ENCODE measurements at regions of chr6 and their contacts with region 1.

Region 1: DNA sequence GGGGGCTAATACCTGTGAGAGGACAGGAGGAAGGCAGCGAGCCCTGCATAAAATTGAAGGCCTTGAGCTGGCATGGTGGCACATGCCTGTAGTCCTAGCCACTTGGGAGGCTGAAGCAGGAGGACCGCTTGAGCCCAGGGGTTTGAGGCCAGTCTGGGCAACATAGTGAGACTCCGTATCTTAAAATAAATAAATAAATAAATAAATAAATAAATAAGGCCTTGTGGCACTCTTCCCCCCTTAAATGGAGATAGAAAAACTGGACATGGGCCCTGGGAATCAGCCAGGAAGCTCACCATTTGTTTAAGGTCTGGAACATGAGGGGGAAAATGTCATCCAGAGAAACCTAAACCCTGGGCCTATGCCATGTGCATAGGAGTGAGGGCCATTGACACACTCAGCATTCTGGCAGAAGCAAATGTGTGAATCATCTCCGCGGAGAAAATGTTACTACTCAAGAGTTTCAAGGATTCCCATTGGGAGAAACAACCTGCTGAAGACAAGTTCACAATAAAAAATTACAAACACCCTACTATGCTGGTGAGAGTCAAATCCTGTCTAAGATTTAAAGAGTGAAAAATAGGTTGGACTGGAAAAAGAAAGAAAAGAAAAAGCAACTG is 51.9 kb upstream of the UBR2 start:
- DNase-seq: no peak
- H3K4me3 ChIP-seq: no peak overlapping the region
- H3K27ac ChIP-seq: no peak overlapping the region
- H3K4me1 ChIP-seq: no peaks in the 10 kb centered on the region
- H3K27me3 ChIP-seq: no peaks in the 10 kb centered on the region
- CTCF ChIP-seq: no peak

Region 2: DNA sequence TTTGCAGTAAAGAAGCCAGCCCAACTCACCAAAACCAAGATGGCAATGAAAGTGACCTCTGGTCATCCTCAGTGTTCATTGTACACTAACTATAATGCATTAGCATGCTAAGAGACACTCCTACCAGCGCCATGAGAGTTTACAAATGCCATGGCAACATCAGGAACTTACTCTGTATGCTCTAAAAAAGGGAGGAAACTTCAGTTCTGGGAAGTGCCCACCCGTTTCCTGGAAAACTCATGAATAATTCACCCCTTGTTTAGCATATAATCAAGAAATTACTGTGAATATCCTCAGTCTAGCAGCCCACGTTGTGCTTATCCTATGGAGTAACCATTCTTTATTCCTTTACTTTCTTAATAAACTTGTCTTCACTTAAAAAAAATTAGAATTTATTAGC is 40.8 kb before region 1 on chr6:
- CTCF ChIA-PET with region 1: no interaction called
- POLR2A ChIA-PET with region 1: interaction called, 10 read pairs
- intact Hi-C with region 1: no loop called
- DNase-seq: no peak
- H3K4me3 ChIP-seq: no peak overlapping the region
- H3K27ac ChIP-seq: no peak overlapping the region
- H3K4me1 ChIP-seq: no peaks in the 10 kb centered on the region
- H3K27me3 ChIP-seq: no peaks in the 10 kb centered on the region
- CTCF ChIP-seq: no peak